ENCODE measurements at regions of chr5 and their contacts with region 1.

Region 1: GRCh38 chr5:57209351-57210040 is 35.6 kb downstream of the GPBP1 start:
- DNase-seq: no peak
- H3K4me3 ChIP-seq: no peak overlapping the region
- H3K27ac ChIP-seq: no peak overlapping the region
- H3K4me1 ChIP-seq: peaks cover 0 to 60% (median 14%) of the 10 kb centered on the region in 4 donors
- H3K27me3 ChIP-seq: no peaks in the 10 kb centered on the region
- CTCF ChIP-seq: no peak

Region 2: GRCh38 chr5:56200856-56201666 is 1008.4 kb before region 1 on chr5:
- intact Hi-C with region 1: no loop called
- DNase-seq: peak in 1 of 2 donors; percentile 37
- H3K4me3 ChIP-seq: no peak overlapping the region
- H3K27ac ChIP-seq: no peak overlapping the region
- H3K4me1 ChIP-seq: peaks cover 0 to 7% (median 0%) of the 10 kb centered on the region in 4 donors
- H3K27me3 ChIP-seq: no peaks in the 10 kb centered on the region
- CTCF ChIP-seq: peak; percentile 63 to 66

Region 3: DNA sequence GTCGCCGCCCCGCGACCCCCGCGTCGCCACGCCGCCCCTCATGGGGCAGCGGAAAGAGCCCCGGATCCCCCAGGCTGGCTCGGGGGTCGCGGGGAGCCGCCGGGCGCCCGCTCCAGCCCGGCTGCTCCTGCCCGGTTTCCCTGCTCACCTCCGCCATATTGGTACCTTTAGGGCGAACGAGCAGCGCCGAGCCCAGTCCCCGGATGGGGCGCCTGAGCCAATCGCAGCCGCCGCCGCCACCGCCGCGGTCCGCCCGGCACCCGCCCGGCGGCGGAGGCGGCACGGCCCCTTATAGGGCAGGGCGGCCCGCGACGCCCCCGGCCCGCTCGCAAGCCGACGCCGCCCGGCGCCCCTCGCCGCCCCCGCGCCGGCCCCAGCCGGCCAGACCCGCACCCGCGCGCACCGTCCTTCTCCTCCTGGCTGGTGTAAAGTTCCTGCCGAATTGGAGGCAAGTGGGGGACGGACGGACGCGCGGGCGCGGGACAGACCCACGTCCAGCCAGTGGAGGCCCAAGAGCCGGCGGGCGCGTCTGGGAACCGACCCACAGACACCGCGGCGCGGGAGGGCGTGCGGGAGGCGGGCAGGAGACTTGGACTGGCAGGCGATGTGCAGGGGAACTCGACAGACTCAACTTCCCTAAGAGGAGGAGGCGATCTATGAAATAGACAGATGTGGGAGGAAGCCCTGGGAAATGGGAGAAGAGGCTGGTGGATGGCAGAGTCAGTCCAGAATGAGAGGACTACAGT is 257.4 kb before region 1 on chr5 and contains the start of gene MIER3:
- intact Hi-C with region 1: loop called (anchors 10 kb)
- DNase-seq: peak; percentile 58 to 86
- H3K4me3 ChIP-seq: peak within 1 kb of the TSS; percentile 89 to 93
- H3K27ac ChIP-seq: peak within 1 kb of the TSS; percentile 77 to 89
- H3K4me1 ChIP-seq: peaks cover 0 to 19% (median 12%) of the 10 kb centered on the region in 4 donors
- H3K27me3 ChIP-seq: no peaks in the 10 kb centered on the region
- CTCF ChIP-seq: no peak

Measured in tibial artery (tissue), 4 donors.